HCT116 (cell line): ENCODE measurements at regions of chr2 and their contacts with region 1.

Region 1: GRCh38 chr2:99489761-99490622 is at the start of gene REV1:
- DNase-seq: peak; percentile 83
- ATAC-seq: peak; percentile 85
- H3K4me3 ChIP-seq: peak within 1 kb of the TSS; percentile 68 to 88
- H3K27ac ChIP-seq: peak within 1 kb of the TSS; percentile 87
- H3K4me1 ChIP-seq: peaks cover 9 to 27% of the 10 kb centered on the region in 2 experiments; a peak in 3 of 4 replicates
- H3K27me3 ChIP-seq: no peaks in the 10 kb centered on the region
- CTCF ChIP-seq: peak; percentile 51 to 84 (median 70)
- POLR2A ChIP-seq: peak; percentile 27
- RAD21 ChIP-seq: peak; percentile 93
- total RNA-seq, gene REV1: 34.3 TPM

Region 2: DNA sequence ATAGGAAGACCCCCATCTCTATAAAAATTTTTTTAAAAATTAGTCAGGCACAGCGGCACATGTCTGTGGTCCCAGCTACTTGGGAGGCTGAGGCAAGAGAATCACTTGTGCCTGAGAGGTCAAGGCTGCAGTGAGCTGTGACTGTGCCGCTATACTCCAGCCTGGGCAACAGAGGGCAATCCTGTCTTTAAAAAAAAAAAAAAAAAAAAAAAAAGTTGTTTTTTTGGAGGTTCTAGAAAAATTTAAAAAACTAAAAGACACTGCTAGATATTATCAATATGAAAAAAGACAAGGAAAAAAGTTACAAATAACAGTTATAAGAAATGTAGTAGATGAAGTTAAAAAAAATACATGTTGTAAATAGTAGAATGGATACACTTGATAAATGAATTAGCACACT is 404.6 kb before region 1 on chr2:
- CTCF ChIA-PET with region 1: no interaction called
- POLR2A ChIA-PET with region 1: no interaction called
- RAD21 ChIA-PET with region 1: no interaction called
- intact Hi-C with region 1: loop called (anchors 5 kb)
- DNase-seq: no peak
- ATAC-seq: peak; percentile 72
- H3K4me3 ChIP-seq: no peak overlapping the region
- H3K27ac ChIP-seq: no peak overlapping the region
- H3K4me1 ChIP-seq: no peaks in the 10 kb centered on the region
- H3K27me3 ChIP-seq: no peaks in the 10 kb centered on the region
- CTCF ChIP-seq: peak; percentile 25 to 49 (median 46); a peak in 5 of 6 replicates
- POLR2A ChIP-seq: no peak
- RAD21 ChIP-seq: peak; percentile 52

Region 3: DNA sequence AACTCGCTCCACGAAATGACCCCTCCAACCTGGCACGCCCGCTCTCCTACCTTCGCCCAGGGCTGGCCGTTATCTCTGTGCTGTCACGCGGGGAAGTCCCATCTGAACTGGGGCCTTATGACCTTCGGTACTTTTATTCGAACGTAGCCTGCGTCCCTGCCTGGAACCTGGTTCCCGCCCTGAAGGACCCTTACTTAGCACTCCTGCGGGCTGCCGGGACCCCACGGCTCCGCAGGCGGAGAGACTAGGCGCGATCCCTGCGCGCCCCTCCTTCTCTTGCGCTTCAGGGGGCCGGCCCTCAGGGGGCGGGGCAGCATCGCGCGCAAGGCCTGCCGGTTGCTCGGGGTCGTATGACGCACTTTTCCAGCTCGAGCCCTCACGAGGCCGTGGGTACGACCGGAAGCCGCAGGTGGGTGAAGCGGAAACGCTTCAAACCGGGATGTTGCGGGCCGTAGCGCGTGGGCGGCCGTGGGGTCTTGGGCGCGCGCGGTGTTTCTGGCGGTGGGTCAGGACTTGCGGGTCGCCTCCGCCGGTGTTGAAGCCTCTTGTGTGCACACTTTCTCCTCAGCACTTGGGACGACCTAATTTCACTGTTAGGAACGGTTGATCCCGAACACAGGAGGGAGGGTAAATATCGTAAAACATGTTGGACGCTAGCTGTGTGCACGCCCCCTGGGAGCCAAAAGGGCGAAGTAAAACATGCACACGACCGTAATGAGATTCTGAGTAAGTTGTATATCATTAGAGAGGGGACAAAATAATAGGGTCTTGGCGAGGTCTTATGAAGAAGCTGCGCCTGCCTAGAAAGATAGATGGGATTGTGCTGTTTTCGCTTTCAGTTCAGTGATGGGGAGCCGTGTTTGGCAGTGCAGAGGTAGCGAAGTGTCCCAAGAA is 335.1 kb before region 1 on chr2 and contains the starts of genes LIPT1 and TSGA10:
- CTCF ChIA-PET with region 1: interaction called, 3 read pairs
- POLR2A ChIA-PET with region 1: no interaction called
- RAD21 ChIA-PET with region 1: no interaction called
- intact Hi-C with region 1: loop called (anchors 10 kb)
- DNase-seq: peak; percentile 82
- ATAC-seq: peak; percentile 96
- H3K4me3 ChIP-seq: peak within 1 kb of the TSS; percentile 71 to 81
- H3K27ac ChIP-seq: peak within 1 kb of the TSS; percentile 61
- H3K4me1 ChIP-seq: peaks cover 13 to 15% of the 10 kb centered on the region in 2 experiments
- H3K27me3 ChIP-seq: no peaks in the 10 kb centered on the region
- CTCF ChIP-seq: 0 out of 6 replicates have a peak, but pooled peaks of 1 of the 3 experiments have one; percentile 7
- POLR2A ChIP-seq: peak; percentile 90
- RAD21 ChIP-seq: no peak
- total RNA-seq, gene LIPT1: 8.5 TPM
- total RNA-seq, gene TSGA10: 6.6 TPM

Region 4: GRCh38 chr2:99180755-99181623 is 309.0 kb before region 1 on chr2 and contains the starts of genes MITD1 and MRPL30:
- CTCF ChIA-PET with region 1: no interaction called
- POLR2A ChIA-PET with region 1: no interaction called
- RAD21 ChIA-PET with region 1: no interaction called
- intact Hi-C with region 1: loop called (anchors 2 kb)
- DNase-seq: peak; percentile 92
- ATAC-seq: peak; percentile 88
- H3K4me3 ChIP-seq: peak within 1 kb of the TSS; percentile 72 to 78
- H3K27ac ChIP-seq: peak within 1 kb of the TSS; percentile 67
- H3K4me1 ChIP-seq: peaks cover 9 to 21% of the 10 kb centered on the region in 2 experiments; a peak in 3 of 4 replicates
- H3K27me3 ChIP-seq: no peaks in the 10 kb centered on the region
- CTCF ChIP-seq: no peak
- POLR2A ChIP-seq: peak; percentile 82
- RAD21 ChIP-seq: no peak
- total RNA-seq, gene MITD1: 20.7 TPM
- total RNA-seq, gene MRPL30: 38.1 TPM